Cardiac septum (tissue), 1 donor: ENCODE measurements at regions of chr16 and their contacts with region 1.

Region 1: GRCh38 chr16:19555162-19555937 is at the start of gene VPS35L:
- DNase-seq: peak; percentile 99
- total RNA-seq, gene VPS35L: 30.1 TPM

Region 2: GRCh38 chr16:19523648-19524355 is 31.5 kb before region 1 on chr16 and contains the start of gene CCP110:
- intact Hi-C with region 1: loop called (anchors 2 kb)
- DNase-seq: peak; percentile 99
- total RNA-seq, gene CCP110: 7.3 TPM